ENCODE measurements at regions of chr11 and their contacts with region 1.

Region 1: GRCh38 chr11:76807206-76807875 is 24.2 kb downstream of the TSKU start:
- DNase-seq: peak; percentile 68 to 97 (median 88)

Region 2: GRCh38 chr11:76860539-76861475 is 53.5 kb after region 1 on chr11 and contains the start of gene ACER3:
- intact Hi-C with region 1: loop called (anchors 5 kb)
- DNase-seq: peak; percentile 75 to 98 (median 86)

Measured in posterior cingulate gyrus (tissue), 11 donors.